ENCODE measurements at regions of chr18 and their contacts with region 1.

Region 1: DNA sequence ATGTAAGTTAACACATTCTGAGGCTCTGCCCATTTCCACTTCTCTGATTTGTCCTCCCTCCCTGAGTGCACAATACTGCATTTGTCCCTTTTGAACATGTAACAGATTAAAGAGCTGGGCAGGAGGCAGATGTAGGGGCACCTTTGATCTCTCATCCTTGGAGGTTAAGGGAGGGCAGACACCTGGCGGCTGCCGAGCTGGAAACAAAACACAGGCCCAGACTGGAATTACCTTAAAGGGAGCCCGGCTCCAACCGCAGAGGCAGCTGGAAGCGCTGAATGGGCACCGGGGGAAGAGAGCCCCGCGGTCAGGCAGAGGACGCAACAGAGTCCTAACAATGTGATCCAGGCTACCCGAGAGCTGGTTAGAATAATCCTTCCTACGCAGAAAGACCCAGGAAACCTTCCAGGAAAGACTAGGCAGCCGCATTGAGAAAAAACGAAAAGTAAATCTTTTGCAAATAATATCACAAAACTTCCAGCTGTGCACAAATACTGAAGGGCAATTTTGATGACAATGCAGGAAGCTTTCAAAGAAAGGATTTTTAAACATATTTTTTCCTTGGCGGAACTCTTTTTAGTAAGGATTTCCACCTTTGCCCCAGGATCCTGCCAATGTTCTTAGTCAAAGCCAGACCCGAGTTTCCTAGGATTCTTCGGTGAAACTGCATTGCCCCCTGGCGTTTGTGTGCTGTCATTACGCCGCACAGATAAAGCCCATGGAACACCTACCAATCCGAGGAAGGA is 216.0 kb downstream of the TGIF1 start:
- DNase-seq: peak; percentile 39 to 83 (median 75)
- ATAC-seq: peak; percentile 91
- H3K4me3 ChIP-seq: no peak overlapping the region
- H3K4me3 Mint-ChIP-seq: peak overlapping the region; percentile 35
- H3K27ac ChIP-seq: no peak overlapping the region
- H3K27ac Mint-ChIP-seq: no peak overlapping the region
- H3K4me1 ChIP-seq: no peaks in the 10 kb centered on the region
- H3K4me1 Mint-ChIP-seq: peaks cover 8% of the 10 kb centered on the region
- H3K27me3 ChIP-seq: no peaks in the 10 kb centered on the region
- H3K27me3 Mint-ChIP-seq: peaks cover 2% of the 10 kb centered on the region
- CTCF ChIP-seq: peak; percentile 96

Region 2: GRCh38 chr18:2825603-2826175 is 840.3 kb before region 1 on chr18:
- CTCF ChIA-PET with region 1: no interaction called
- POLR2A ChIA-PET with region 1: no interaction called
- intact Hi-C with region 1: no loop called
- DNase-seq: no peak
- ATAC-seq: no peak
- H3K4me3 ChIP-seq: no peak overlapping the region
- H3K4me3 Mint-ChIP-seq: no peak overlapping the region
- H3K27ac ChIP-seq: no peak overlapping the region
- H3K27ac Mint-ChIP-seq: no peak overlapping the region
- H3K4me1 ChIP-seq: no peaks in the 10 kb centered on the region
- H3K4me1 Mint-ChIP-seq: no peaks in the 10 kb centered on the region
- H3K27me3 ChIP-seq: no peaks in the 10 kb centered on the region
- H3K27me3 Mint-ChIP-seq: no peaks in the 10 kb centered on the region
- CTCF ChIP-seq: no peak

Region 3: GRCh38 chr18:3261371-3262246 is 404.3 kb before region 1 on chr18 and contains the start of gene MYL12B:
- CTCF ChIA-PET with region 1: interaction called, 11 read pairs
- POLR2A ChIA-PET with region 1: no interaction called
- intact Hi-C with region 1: no loop called
- DNase-seq: peak; percentile 58 to 92 (median 79)
- ATAC-seq: peak; percentile 69
- H3K4me3 ChIP-seq: peak within 1 kb of the TSS; percentile 72 to 80
- H3K4me3 Mint-ChIP-seq: peak within 1 kb of the TSS; percentile 90
- H3K27ac ChIP-seq: peak within 1 kb of the TSS; percentile 96 to 97
- H3K27ac Mint-ChIP-seq: peak within 1 kb of the TSS; percentile 100
- H3K4me1 ChIP-seq: peaks cover 52% of the 10 kb centered on the region
- H3K4me1 Mint-ChIP-seq: peaks cover 82% of the 10 kb centered on the region
- H3K27me3 ChIP-seq: no peaks in the 10 kb centered on the region
- H3K27me3 Mint-ChIP-seq: no peaks in the 10 kb centered on the region
- CTCF ChIP-seq: no peak
- total RNA-seq, gene MYL12B: 117 to 132 TPM

Region 4: DNA sequence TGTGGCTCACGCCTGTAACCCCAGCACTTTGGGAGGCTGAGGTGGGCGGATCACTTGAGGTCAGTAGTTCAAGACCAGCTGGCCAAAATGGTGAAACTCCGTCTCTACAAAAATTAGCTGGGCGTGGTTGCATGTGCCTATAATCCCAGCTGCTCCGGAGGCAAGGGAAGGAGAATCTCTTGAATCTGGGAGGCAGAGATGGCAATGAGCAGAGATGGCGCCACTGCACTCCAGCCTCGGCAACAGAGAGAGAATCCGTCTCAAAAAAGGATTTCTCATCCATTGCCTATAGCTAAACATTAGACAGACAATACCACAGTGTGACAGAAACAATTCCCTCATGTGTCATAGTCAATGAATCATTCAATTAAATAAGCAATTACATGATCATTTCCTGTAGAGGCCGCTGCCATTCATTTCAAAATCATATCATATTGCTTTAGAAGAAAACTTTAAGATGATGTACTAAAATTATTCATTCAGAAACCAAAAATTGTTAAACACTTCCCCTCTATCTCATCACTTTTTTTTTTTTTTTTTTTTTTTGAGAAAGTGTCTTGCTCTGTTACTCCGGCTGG is 285.5 kb before region 1 on chr18:
- CTCF ChIA-PET with region 1: interaction called, 7 read pairs
- POLR2A ChIA-PET with region 1: no interaction called
- intact Hi-C with region 1: loop called in 1 of 2 experiments (anchors 5 kb)
- DNase-seq: peak in 2 of 9 experiments; percentile 51 to 61
- ATAC-seq: peak; percentile 58
- H3K4me3 ChIP-seq: no peak overlapping the region
- H3K4me3 Mint-ChIP-seq: no peak overlapping the region
- H3K27ac ChIP-seq: no peak overlapping the region
- H3K27ac Mint-ChIP-seq: no peak overlapping the region
- H3K4me1 ChIP-seq: no peaks in the 10 kb centered on the region
- H3K4me1 Mint-ChIP-seq: no peaks in the 10 kb centered on the region
- H3K27me3 ChIP-seq: no peaks in the 10 kb centered on the region
- H3K27me3 Mint-ChIP-seq: peaks cover 4% of the 10 kb centered on the region
- CTCF ChIP-seq: peak; percentile 21

Region 5: DNA sequence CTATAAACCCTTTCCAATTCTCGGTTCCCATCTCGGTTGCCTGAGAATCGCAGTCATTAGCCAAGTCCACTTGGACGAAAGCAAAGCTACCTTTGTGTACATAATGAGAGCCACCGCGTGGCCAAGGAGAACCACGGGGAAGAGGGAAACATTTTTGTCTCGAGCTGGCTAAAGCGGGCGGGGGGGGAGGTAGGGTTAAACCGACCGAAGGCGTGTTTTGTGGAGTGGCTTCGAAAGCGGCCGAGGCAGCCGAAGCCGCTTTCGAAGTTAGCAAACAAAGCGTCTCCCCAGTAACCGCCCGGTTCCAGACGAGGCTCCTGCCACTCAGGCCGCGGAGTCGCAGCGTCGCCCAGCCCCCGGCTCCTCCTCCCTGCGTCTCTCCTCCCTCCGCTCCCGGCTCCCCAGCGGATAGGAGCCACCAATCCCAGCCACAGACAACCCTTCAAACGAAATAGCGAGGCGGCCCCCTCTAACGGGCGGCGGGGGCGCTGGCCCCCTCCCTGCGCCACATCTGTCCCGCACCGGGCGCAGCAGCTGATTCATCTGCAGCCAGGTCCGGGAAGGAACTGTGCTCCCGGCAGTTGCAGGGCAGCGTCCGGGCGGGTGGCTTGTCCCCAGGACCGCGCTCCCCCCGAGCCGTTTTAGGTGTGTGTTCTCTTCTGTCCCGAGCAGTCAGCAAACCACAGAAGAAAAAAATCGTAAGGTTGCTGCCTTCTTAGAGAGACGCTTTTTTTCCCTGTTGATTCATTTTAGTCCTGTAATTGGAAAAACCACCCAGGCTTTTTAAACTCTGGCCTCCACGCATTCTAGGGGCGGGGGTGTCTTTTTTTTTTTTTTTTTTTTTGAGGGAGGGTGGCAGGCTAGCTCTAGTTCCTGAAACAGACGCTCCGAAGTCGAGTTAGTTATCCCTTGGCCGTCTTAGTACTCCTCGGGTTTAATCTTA is 217.8 kb before region 1 on chr18:
- CTCF ChIA-PET with region 1: interaction called, 64 read pairs
- POLR2A ChIA-PET with region 1: no interaction called
- intact Hi-C with region 1: no loop called
- DNase-seq: peak; percentile 65 to 94 (median 86)
- ATAC-seq: peak; percentile 41
- H3K4me3 ChIP-seq: peak overlapping the region; percentile 66 to 95
- H3K4me3 Mint-ChIP-seq: peak overlapping the region; percentile 90
- H3K27ac ChIP-seq: peak overlapping the region; percentile 95 to 100
- H3K27ac Mint-ChIP-seq: peak overlapping the region; percentile 99
- H3K4me1 ChIP-seq: peaks cover 15% of the 10 kb centered on the region
- H3K4me1 Mint-ChIP-seq: peaks cover 39% of the 10 kb centered on the region
- H3K27me3 ChIP-seq: no peaks in the 10 kb centered on the region
- H3K27me3 Mint-ChIP-seq: no peaks in the 10 kb centered on the region
- CTCF ChIP-seq: no peak

Region 6: DNA sequence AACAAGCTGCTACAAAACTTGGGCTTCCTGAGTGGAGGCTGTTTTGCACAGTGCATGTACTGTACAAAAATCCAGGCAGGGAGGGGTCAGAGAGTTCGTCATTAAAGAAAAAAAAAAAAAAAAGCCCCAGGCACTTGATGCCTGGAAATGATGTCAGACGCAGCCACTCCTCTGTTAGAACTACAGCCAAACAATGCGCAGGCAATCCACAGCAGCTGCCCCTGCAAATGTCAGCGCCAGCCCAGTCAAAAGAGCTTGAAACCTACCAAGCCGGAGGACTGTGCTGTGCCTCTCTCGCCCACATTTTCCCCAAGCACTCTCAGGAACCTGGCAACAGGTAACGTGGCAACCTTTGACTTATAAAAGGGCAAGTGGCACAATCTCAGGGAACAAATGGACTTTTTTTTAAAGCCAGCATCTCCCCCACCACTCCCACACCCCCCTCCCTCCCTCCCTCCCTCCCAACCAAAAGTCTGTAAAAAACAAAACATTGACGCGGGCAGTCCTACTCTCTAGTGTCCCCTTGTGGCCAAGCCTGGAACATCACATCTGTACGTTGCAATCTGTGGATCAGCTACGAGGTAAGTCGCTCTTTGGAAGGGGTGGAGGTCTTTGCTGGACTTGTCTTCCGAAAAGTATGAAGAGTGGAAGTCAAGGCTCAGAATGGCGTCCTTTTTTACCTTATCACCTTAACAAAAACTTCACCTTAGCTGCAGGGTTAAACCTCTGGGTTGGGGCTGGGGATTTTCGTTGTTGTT is 71.9 kb before region 1 on chr18:
- CTCF ChIA-PET with region 1: interaction called, 33 read pairs
- POLR2A ChIA-PET with region 1: interaction called, 4 read pairs
- intact Hi-C with region 1: loop called (anchors 1 to 5 kb)
- DNase-seq: peak; percentile 82 to 97 (median 89)
- ATAC-seq: peak; percentile 81
- H3K4me3 ChIP-seq: peak overlapping the region; percentile 67
- H3K4me3 Mint-ChIP-seq: peak overlapping the region; percentile 91
- H3K27ac ChIP-seq: peak overlapping the region; percentile 93 to 99
- H3K27ac Mint-ChIP-seq: peak overlapping the region; percentile 99
- H3K4me1 ChIP-seq: peaks cover 41% of the 10 kb centered on the region
- H3K4me1 Mint-ChIP-seq: peaks cover 50% of the 10 kb centered on the region
- H3K27me3 ChIP-seq: no peaks in the 10 kb centered on the region
- H3K27me3 Mint-ChIP-seq: no peaks in the 10 kb centered on the region
- CTCF ChIP-seq: peak; percentile 80

Region 7: DNA sequence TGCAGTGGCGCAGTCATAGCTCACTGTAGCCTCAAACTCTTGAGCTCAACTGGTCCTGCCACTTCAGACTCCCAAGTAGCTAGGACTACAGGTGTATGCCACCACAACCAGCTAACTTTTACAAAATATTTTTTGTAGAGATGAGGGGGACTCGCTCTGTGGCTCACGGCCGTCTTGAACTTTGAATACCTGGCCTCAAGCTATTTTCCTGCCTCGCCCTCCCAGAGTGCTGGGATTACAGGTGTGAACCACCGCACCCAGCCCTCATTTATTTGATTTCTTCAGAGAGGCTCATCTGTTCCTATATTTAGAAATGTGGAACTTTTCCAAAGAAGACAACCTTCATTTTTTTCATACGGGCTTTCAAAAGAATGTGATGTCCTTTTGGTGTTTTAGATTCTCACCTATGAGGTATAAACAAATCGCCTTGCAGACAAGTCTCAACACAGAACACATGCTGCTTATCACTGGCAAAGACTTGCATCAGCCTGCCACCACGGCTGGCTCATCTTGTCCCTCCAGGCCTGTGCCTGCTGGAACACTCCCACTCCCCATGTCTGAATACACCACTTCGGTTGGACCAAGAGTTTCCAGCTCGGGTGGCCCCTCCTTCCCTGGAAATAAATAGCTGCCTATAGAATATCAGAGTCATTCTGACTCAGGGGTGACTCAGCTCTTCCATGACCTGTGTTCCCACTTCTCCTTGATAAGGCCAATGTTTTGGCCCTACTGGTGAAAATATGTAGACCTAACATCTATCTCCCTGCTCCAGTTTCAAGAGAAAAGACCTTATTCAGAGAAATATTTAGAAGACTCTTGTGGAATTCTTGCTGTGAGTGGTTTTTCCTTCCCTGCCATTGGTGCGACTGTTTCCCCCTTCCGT is 13.3 kb before region 1 on chr18:
- CTCF ChIA-PET with region 1: interaction called, 18 read pairs
- POLR2A ChIA-PET with region 1: no interaction called
- intact Hi-C with region 1: no loop called
- DNase-seq: no peak
- ATAC-seq: no peak
- H3K4me3 ChIP-seq: no peak overlapping the region
- H3K4me3 Mint-ChIP-seq: no peak overlapping the region
- H3K27ac ChIP-seq: no peak overlapping the region
- H3K27ac Mint-ChIP-seq: no peak overlapping the region
- H3K4me1 ChIP-seq: no peaks in the 10 kb centered on the region
- H3K4me1 Mint-ChIP-seq: no peaks in the 10 kb centered on the region
- H3K27me3 ChIP-seq: no peaks in the 10 kb centered on the region
- H3K27me3 Mint-ChIP-seq: no peaks in the 10 kb centered on the region
- CTCF ChIP-seq: no peak

Region 8: DNA sequence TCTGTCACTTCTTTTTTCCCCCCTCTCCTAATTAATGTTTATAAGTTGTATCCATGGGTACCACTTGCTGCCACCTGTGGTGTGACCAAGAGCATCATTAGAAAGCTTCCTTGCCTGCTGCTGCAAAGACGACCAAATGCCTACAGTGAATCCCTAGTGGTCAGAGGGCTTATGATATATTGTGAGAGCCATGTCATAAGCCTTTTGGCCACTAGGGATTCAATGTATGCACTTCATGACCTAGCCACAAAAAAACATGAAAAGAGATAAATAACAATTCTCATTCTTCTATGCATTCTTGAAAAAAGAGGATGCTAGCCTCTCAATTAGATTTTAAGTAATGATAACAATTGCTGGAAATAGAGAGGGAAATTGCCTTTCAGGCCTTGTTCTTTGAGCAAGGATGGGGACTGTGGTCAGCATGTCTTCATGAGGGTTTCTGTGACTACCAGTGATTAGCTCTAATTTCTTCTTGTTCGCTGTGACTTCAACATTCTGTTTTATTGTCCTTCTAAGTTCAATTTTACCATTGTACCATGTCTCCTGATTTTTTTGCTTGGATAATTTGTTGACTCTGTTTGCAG is 219.3 kb after region 1 on chr18:
- CTCF ChIA-PET with region 1: no interaction called
- POLR2A ChIA-PET with region 1: no interaction called
- intact Hi-C with region 1: no loop called
- DNase-seq: no peak
- ATAC-seq: no peak
- H3K4me3 ChIP-seq: no peak overlapping the region
- H3K4me3 Mint-ChIP-seq: no peak overlapping the region
- H3K27ac ChIP-seq: no peak overlapping the region
- H3K27ac Mint-ChIP-seq: no peak overlapping the region
- H3K4me1 ChIP-seq: no peaks in the 10 kb centered on the region
- H3K4me1 Mint-ChIP-seq: no peaks in the 10 kb centered on the region
- H3K27me3 ChIP-seq: no peaks in the 10 kb centered on the region
- H3K27me3 Mint-ChIP-seq: peaks cover 8% of the 10 kb centered on the region
- CTCF ChIP-seq: no peak